ENCODE measurements at regions of chr12 and their contacts with region 1.

Region 1: GRCh38 chr12:70756146-70756586 is 118.9 kb upstream of the PTPRB start:
- DNase-seq: no peak
- ATAC-seq: peak; percentile 58; the same call in 1 of the 2 replicates
- H3K4me3 ChIP-seq: no peak overlapping the region
- H3K27ac ChIP-seq: no peak overlapping the region
- H3K4me1 ChIP-seq: no peaks in the 10 kb centered on the region
- H3K27me3 ChIP-seq: peaks cover 2% of the 10 kb centered on the region
- CTCF ChIP-seq: no peak

Region 2: DNA sequence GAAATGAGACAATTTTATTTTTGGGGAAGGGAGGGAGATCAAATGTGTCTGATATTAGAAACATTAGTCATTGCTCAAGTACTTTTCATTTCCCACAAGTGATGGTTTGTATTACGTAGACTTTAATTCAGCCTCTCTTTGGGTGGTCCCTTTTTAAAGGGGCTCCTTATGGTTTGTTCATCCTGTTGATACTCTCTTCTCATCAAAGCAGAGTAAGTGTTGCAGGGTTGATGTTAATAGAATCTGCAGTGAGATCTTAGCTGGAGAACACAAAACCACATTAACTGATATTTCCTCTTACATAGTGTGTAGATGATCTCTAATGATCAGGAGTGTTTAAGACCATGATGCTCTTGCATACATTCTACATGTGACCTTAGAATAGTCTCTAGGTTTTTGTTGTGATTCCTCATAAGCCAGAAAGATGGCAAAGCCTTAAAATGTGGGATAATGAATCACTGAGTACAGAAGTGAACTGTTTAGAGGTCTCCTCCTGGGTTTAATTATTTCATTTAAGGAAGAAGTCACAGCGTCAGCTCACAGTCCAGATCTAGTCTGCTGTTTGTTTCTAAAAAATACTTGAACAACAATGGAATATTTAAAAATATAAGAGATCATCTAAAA is 251.7 kb after region 1 on chr12:
- CTCF ChIA-PET with region 1: no interaction called
- POLR2A ChIA-PET with region 1: no interaction called
- in situ Hi-C with region 1: no loop called
- intact Hi-C with region 1: loop called (anchors 10 kb)
- DNase-seq: no peak
- ATAC-seq: no peak
- H3K4me3 ChIP-seq: no peak overlapping the region
- H3K27ac ChIP-seq: no peak overlapping the region
- H3K4me1 ChIP-seq: no peaks in the 10 kb centered on the region
- H3K27me3 ChIP-seq: no peaks in the 10 kb centered on the region
- CTCF ChIP-seq: no peak

Measured in Panc1 (cell line).